ENCODE measurements at regions of chr12 and their contacts with region 1.

Region 1: DNA sequence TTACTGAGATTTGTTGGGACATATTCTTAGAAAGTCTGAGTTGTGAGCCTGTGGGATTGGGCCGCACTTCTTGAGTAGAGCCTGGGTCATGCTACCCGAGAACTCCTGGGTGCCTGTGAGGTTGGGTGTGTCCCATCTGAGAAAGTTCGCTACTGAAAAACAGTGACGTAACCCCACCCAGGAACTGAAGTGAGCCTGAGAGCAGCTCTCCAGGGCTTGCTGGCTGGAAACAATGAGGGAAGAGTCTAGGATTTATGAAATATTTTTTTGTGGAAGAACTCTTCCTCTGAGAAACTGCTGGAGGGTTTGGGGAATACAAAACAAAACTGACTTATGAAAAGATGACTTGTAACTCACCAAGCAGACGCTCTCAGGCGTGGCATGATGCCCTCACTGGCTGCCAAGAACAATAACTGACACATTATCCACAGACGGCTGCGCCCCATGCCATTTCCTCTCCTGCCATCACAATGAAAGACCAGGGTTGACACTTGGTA is 69.2 kb downstream of the RASSF3 start:
- DNase-seq: peak; percentile 69
- ATAC-seq: peak; percentile 74
- H3K4me3 Mint-ChIP-seq: peak overlapping the region; percentile 60
- H3K27ac Mint-ChIP-seq: peak overlapping the region; percentile 88
- H3K4me1 Mint-ChIP-seq: peaks cover 90% of the 10 kb centered on the region
- H3K27me3 Mint-ChIP-seq: no peaks in the 10 kb centered on the region

Region 2: DNA sequence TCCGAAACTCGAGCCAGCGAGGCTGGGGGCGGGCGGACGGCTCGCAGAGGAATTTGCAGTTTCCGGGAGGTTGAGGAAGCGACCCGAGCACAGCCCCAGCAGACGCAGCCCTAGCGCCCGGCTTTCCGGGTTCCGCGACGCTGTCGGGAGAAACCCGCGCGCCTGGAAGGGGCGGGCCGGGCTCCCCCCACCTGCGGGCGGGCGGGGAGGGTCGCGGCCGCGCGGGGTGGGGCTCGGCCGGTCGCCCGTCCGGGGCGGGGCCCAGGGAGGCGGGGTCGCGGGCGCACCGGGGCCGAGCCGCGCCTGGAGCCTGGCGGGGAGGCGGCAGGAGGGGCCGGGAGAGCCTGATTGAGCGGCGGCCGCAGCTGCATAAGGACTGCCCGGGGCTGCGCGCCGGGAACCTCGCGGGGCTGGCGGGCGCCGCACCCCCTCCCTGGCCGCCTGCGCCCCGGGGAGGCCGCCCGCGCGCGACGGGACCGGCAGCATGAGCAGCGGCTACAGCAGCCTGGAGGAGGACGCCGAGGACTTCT is 69.3 kb before region 1 on chr12 and contains the start of gene RASSF3:
- CTCF ChIA-PET with region 1: interaction called, 10 read pairs
- POLR2A ChIA-PET with region 1: interaction called, 24 read pairs
- DNase-seq: peak; percentile 84
- ATAC-seq: peak; percentile 71
- H3K4me3 Mint-ChIP-seq: peak within 1 kb of the TSS; percentile 99
- H3K27ac Mint-ChIP-seq: peak within 1 kb of the TSS; percentile 96
- H3K4me1 Mint-ChIP-seq: peaks cover 36% of the 10 kb centered on the region
- H3K27me3 Mint-ChIP-seq: no peaks in the 10 kb centered on the region
- total RNA-seq, gene RASSF3: 61.7 to 63.7 TPM

Region 3: GRCh38 chr12:64669270-64669842 is 10.2 kb before region 1 on chr12:
- CTCF ChIA-PET with region 1: interaction called, 54 read pairs
- POLR2A ChIA-PET with region 1: interaction called, 71 read pairs
- DNase-seq: peak; percentile 67
- ATAC-seq: peak; percentile 85
- H3K4me3 Mint-ChIP-seq: peak overlapping the region; percentile 87
- H3K27ac Mint-ChIP-seq: peak overlapping the region; percentile 98
- H3K4me1 Mint-ChIP-seq: peaks cover 91% of the 10 kb centered on the region
- H3K27me3 Mint-ChIP-seq: no peaks in the 10 kb centered on the region

Region 4: GRCh38 chr12:64746663-64747062 is 67.1 kb after region 1 on chr12:
- CTCF ChIA-PET with region 1: no interaction called
- POLR2A ChIA-PET with region 1: no interaction called
- DNase-seq: no peak
- ATAC-seq: no peak
- H3K4me3 Mint-ChIP-seq: no peak overlapping the region
- H3K27ac Mint-ChIP-seq: no peak overlapping the region
- H3K4me1 Mint-ChIP-seq: peaks cover 2% of the 10 kb centered on the region
- H3K27me3 Mint-ChIP-seq: no peaks in the 10 kb centered on the region